Activated T-helper 1 cell treated with anti-CD3 and anti-CD28 coated beads, Interleukin-12 subunit alpha, Interleukin-12 subunit beta, Interleukin-2, Interleukin-4 antibody, amounts not matched to agents 30 ng/mL and 10 ng/mL and 1 ng/mL, durations not matched to agents 14 hours and 24 hours and 36 hours (primary cell): ENCODE measurements at regions of chr12 and their contacts with region 1.

Region 1: DNA sequence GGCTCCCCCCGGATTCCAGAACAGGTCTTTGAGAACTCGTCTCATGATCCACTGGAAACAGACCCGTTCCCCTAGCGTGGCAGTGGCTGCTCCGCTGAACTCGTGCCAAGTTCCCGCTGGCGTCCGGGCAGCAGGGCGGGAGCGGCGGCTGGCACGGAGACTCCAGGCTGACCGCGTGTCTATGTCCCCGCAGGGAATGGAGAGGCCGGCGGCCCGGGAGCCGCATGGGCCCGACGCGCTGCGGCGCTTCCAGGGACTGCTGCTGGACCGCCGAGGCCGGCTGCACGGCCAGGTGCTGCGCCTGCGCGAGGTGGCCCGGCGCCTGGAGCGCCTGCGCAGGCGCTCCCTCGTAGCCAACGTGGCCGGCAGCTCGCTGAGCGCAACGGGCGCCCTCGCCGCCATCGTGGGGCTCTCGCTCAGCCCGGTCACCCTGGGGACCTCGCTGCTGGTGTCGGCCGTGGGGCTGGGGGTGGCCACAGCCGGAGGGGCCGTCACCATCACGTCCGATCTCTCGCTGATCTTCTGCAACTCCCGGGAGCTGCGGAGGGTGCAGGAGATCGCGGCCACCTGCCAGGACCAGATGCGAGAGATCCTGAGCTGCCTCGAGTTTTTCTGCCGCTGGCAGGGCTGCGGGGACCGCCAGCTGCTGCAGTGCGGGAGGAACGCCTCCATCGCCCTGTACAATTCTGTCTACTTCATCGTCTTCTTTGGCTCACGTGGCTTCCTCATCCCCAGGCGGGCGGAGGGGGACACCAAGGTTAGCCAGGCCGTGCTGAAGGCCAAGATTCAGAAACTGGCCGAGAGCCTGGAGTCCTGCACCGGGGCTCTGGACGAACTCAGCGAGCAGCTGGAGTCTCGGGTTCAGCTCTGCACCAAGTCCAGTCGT is 1.5 kb downstream of the APOLD1 start:
- DNase-seq: peak; percentile 70
- H3K4me3 Mint-ChIP-seq: peak overlapping the region; percentile 89
- H3K27ac Mint-ChIP-seq: peak overlapping the region; percentile 88
- H3K4me1 Mint-ChIP-seq: peaks cover 42% of the 10 kb centered on the region
- H3K27me3 Mint-ChIP-seq: no peaks in the 10 kb centered on the region

Region 2: GRCh38 chr12:12636641-12637040 is 150.3 kb before region 1 on chr12:
- intact Hi-C with region 1: no loop called
- DNase-seq: no peak
- H3K4me3 Mint-ChIP-seq: no peak overlapping the region
- H3K27ac Mint-ChIP-seq: peak overlapping the region; percentile 21
- H3K4me1 Mint-ChIP-seq: peaks cover 5% of the 10 kb centered on the region
- H3K27me3 Mint-ChIP-seq: no peaks in the 10 kb centered on the region

Region 3: DNA sequence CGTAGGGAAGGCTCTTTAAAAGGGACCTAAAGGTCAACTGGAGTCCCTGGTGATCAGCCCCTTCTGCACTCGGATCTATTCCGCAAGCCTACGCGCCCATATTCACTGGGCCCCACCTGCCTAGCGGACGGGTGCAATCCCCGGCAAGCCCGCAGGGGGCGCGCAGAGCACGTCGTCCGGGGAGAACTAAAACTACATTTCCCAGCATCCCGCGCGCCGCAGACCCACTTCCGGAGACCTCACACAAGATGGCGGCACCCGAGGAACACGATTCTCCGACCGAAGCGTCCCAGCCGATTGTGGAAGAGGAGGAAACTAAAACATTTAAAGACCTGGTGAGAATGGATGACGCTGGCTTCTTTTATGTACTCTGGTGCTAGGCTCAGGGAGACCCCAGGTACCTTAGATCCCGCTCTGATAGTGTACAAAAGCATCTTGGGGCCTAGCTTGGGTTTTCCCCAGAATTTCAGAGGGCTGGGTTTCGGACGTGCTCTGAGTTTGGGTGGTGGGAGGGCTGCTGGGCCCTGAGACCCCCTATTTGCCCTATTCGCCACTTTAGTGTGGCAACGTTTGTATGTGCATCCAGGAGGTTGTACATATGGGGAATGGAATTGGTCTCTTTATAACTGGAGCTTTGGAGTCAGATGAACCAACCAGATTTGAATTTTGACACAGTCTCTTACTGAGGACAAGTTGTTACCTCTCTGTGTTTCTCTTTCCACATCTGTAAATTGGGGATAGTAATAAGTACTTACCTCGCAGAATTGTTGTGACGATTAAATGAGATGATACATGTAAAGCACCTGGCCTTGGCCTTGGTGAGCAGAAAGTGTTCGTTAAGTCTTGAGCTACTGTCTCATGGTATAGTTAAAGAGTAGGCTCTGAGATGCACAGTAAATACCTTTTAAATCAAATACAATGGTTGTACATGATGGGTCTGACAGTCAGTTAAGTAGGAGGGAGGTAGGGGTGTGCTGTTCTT is 26.5 kb after region 1 on chr12 and contains the start of gene DDX47:
- intact Hi-C with region 1: loop called (anchors 1 kb)
- DNase-seq: peak; percentile 94
- H3K4me3 Mint-ChIP-seq: peak within 1 kb of the TSS; percentile 85
- H3K27ac Mint-ChIP-seq: peak within 1 kb of the TSS; percentile 81
- H3K4me1 Mint-ChIP-seq: peaks cover 52% of the 10 kb centered on the region
- H3K27me3 Mint-ChIP-seq: no peaks in the 10 kb centered on the region
- total RNA-seq, gene DDX47: 120 and 127 TPM in 2 replicates

Region 4: DNA sequence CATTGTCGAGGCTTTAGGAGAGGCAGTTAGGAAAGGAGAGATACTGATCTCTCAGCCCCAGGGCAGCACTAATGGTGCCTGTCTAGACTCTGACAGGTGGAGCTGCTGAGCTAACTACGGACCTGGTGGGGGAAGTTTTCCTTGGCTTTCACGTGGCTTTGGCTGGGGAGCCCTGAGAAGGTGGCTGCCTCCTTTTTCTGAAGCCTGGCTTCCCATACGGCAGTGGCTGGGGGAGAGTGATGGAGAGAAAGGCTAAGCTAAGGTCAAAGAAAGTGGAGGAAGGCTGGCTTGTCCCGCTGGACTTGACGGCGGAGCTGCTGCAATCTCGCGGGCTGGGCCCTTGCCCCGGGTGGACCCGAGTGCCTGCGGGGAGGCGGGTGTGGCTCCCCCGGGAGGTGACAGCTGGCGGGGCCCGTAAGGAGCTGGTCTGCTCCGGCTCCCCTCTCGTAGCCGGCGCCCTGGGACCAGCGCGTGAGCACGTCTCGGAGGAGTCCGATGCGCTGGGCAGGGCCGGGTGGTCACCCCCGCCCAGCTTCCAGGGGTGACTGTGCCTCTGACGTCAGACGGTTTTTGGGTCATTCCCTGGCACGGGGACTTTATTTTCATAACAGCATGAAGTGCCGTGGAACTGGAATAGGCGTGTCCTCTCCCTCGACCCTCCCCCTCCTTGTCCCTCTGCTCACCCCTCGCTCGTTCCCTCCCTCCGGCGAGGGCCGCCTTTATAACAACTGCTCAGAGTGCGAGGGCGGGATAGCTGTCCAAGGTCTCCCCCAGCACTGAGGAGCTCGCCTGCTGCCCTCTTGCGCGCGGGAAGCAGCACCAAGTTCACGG is 104.1 kb after region 1 on chr12 and contains the start of gene GPRC5A:
- intact Hi-C with region 1: loop called (anchors 2 kb)
- DNase-seq: no peak
- H3K4me3 Mint-ChIP-seq: peak within 1 kb of the TSS; percentile 71
- H3K27ac Mint-ChIP-seq: no peak within 1 kb of the TSS
- H3K4me1 Mint-ChIP-seq: peaks cover 9% of the 10 kb centered on the region
- H3K27me3 Mint-ChIP-seq: peaks cover 51% of the 10 kb centered on the region
- total RNA-seq, gene GPRC5A: not detected in 2 replicates

Region 5: DNA sequence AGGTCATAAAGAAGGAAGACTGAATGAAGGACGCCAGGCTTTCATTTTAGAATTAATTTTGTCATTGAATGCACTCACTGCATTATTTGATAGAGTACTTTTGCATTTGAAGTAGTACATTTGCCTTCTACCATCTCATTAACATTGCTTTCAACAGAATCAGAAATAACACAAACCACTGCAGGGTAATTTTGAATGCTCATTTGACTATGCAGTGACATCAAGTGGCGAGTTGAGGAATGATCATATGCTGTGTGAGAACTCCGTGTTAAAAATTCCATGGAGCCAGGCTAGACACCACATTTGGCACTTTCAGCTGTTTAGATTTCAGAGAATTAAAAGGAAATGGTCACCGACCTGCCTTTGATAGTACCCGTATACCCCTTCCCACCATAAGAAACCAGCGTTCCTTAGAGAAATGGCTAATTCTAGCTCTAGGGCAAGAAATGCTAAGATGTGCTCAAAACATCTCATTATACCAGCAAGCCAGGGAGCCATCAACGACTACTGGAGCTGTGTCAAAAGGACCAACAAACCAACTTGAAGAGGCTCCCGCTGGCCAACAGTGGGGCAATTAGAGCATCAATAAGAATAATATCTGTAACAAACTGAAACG is 196.6 kb after region 1 on chr12:
- intact Hi-C with region 1: loop called (anchors 1 kb)
- DNase-seq: no peak
- H3K4me3 Mint-ChIP-seq: no peak overlapping the region
- H3K27ac Mint-ChIP-seq: no peak overlapping the region
- H3K4me1 Mint-ChIP-seq: no peaks in the 10 kb centered on the region
- H3K27me3 Mint-ChIP-seq: no peaks in the 10 kb centered on the region

Region 6: DNA sequence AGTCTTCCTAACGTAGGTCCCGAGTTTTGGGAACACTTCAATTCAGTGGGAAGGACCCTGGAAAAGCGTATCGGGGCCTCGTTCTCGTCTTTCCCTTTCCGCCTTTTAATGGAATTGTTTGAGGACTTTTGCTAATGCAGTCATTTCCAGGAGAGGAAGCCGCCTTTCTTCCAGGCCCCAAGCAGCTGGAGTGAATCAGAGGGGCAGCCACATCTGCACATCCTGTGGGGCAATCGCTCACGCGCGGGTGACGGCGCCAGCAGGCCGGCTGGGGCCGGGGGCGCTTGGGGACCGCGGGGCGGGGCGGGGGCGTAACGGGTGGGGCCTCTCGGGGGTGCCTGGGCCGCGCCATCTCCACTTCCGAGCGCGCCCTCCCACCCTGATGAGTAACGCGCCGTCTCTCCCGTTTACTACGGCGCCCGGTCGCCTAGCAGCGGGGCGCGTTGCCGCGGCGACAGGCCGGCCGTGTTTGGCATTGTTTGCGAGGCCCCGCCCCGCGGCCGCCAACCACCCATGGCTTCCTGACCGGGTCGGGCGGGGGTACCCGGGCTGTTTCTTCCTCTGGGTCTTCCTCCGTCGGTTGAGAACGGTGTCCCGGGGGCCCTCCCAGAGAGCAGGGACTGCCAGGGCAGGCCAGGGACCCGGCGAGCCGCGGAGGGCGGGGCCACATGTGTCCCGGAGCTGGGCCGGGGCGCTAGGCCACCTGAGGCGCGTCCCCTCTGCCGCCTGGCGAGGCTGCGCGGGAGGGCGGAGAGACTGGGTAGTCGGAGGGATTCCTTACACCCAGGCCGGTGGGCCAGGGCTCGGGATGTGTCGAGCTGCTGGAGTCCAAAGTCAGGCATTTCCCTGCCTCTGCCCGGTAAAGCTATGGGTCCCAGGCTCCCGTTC is 314.2 kb after region 1 on chr12:
- intact Hi-C with region 1: loop called (anchors 2 kb)
- DNase-seq: peak; percentile 90
- H3K4me3 Mint-ChIP-seq: peak overlapping the region; percentile 74
- H3K27ac Mint-ChIP-seq: peak overlapping the region; percentile 89
- H3K4me1 Mint-ChIP-seq: peaks cover 43% of the 10 kb centered on the region
- H3K27me3 Mint-ChIP-seq: peaks cover 5% of the 10 kb centered on the region